Gastrocnemius medialis (tissue), 4 donors: ENCODE measurements at regions of chr1 and their contacts with region 1.

Region 1: GRCh38 chr1:184649451-184649888 is 105.2 kb downstream of the EDEM3 start:
- DNase-seq: no peak
- ATAC-seq: peak; percentile 90 to 93
- H3K4me3 ChIP-seq: peak overlapping the region in 2 of 4 donors; percentile 16 to 23
- H3K27ac ChIP-seq: peak overlapping the region; percentile 72 to 83 (median 74)
- H3K4me1 ChIP-seq: peaks cover 21% of the 10 kb centered on the region in 2 donors
- H3K27me3 ChIP-seq: no peaks in the 10 kb centered on the region
- CTCF ChIP-seq: no peak
- POLR2A ChIP-seq: no peak

Region 2: GRCh38 chr1:184574588-184574987 is 74.9 kb before region 1 on chr1:
- in situ Hi-C with region 1: no loop called
- intact Hi-C with region 1: no loop called
- DNase-seq: peak in 1 of 2 donors; percentile 48
- ATAC-seq: no peak
- H3K4me3 ChIP-seq: no peak overlapping the region
- H3K27ac ChIP-seq: peak overlapping the region; percentile 64 to 87 (median 78)
- H3K4me1 ChIP-seq: peaks cover 40 to 47% of the 10 kb centered on the region in 2 donors
- H3K27me3 ChIP-seq: no peaks in the 10 kb centered on the region
- CTCF ChIP-seq: no peak
- POLR2A ChIP-seq: no peak

Region 3: GRCh38 chr1:184632415-184633175 is 16.9 kb before region 1 on chr1:
- in situ Hi-C with region 1: no loop called
- intact Hi-C with region 1: loop called (anchors 2 kb)
- DNase-seq: peak; percentile 94 to 96
- ATAC-seq: peak; percentile 80 to 83
- H3K4me3 ChIP-seq: no peak overlapping the region
- H3K27ac ChIP-seq: peak overlapping the region; percentile 68 to 97 (median 88)
- H3K4me1 ChIP-seq: peaks cover 48 to 65% of the 10 kb centered on the region in 2 donors
- H3K27me3 ChIP-seq: no peaks in the 10 kb centered on the region
- CTCF ChIP-seq: no peak
- POLR2A ChIP-seq: no peak

Region 4: DNA sequence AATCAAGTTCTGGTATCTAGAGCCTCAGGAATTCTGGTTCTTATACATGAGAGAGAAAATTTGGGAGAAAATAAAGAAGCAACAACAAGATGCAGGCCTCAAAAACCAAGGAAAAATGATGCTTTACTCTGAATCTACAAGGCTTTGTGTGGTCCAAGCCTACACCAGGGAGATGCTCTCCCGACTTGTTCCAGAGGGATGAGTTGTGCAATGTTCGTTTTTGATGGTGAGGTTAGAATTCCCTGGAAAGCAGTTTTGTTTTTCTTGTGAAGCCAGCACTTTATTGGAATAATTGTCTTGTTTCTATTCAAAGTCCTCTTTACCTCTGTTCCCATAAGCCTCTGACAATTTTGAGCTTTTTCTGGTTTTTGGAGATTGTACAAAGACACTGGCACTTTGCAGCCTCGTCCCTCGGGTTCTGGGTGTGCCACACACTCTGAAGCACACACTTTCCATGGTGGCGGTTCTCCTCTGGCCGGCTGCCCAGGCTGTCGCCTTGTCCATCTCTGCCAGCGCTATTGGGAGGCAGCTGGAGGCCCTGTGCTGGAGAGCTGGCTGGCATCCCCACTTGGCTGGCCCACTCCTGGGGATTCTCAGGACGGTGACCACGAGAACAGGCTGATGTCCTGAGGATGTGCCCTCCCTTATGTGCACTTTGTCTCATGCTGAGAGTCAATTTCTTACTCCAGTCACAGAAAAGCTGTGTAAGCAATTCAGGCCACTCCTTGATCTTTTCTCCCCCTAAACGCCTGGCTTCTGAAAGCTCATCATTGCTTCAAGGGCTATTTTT is 35.0 kb after region 1 on chr1:
- in situ Hi-C with region 1: no loop called
- intact Hi-C with region 1: no loop called
- DNase-seq: no peak
- ATAC-seq: peak in 1 of 2 donors; percentile 34
- H3K4me3 ChIP-seq: no peak overlapping the region
- H3K27ac ChIP-seq: no peak overlapping the region
- H3K4me1 ChIP-seq: no peaks in the 10 kb centered on the region
- H3K27me3 ChIP-seq: no peaks in the 10 kb centered on the region
- CTCF ChIP-seq: no peak
- POLR2A ChIP-seq: no peak